Activated B cell treated with CpG ODN at 0.5 μM for 24 hours (primary cell): ENCODE measurements at regions of chr6 and their contacts with region 1.

Region 1: DNA sequence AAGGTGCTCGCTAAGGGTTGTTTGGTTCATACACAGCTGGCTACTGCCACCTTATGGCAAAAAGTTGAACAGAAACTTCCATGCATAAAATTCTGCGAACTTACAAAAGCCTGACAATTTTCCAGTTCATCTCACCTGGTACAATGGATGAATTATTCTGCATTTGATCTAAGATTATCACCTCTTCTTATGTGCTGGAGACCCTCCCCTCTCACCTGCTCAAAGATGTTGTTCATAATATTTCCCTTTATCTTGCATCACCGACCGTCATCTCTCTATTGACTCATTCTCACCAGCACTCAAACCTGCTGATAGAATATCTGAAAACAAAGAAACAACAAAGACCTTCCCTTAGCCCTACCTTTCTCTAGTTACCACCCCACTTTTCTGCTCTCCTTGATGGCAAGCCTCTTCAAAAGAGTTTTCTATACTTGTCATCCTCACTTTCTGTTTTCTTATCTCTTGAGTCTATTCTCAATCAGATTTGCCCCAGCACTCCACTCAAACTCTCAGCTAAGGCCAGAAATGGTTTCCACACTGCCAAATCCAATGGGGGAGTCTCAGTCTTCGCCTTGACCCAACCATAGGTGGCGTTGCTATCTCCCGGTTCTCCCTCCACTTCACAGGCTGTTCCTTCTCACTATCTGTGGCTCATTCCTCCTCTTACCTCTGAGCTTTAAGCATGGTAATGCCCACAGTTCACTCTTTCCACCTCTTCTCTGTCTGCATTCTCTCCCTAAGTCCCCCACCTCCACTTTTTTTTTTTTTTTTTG is 25.8 kb downstream of the SNRNP48 start:
- DNase-seq: no peak
- ATAC-seq: peak; percentile 54
- H3K4me3 Mint-ChIP-seq: no peak overlapping the region
- H3K27ac Mint-ChIP-seq: no peak overlapping the region
- H3K4me1 Mint-ChIP-seq: peaks cover 8% of the 10 kb centered on the region
- H3K27me3 Mint-ChIP-seq: peaks cover 4% of the 10 kb centered on the region
- CTCF ChIP-seq: peak; percentile 26

Region 2: GRCh38 chr6:6556738-6557505 is 1058.9 kb before region 1 on chr6:
- CTCF ChIA-PET with region 1: no interaction called
- POLR2A ChIA-PET with region 1: no interaction called
- intact Hi-C with region 1: loop called (anchors 2 kb)
- DNase-seq: peak; percentile 28
- ATAC-seq: peak; percentile 81
- H3K4me3 Mint-ChIP-seq: no peak overlapping the region
- H3K27ac Mint-ChIP-seq: no peak overlapping the region
- H3K4me1 Mint-ChIP-seq: peaks cover 3% of the 10 kb centered on the region
- H3K27me3 Mint-ChIP-seq: no peaks in the 10 kb centered on the region
- CTCF ChIP-seq: peak; percentile 83

Region 3: DNA sequence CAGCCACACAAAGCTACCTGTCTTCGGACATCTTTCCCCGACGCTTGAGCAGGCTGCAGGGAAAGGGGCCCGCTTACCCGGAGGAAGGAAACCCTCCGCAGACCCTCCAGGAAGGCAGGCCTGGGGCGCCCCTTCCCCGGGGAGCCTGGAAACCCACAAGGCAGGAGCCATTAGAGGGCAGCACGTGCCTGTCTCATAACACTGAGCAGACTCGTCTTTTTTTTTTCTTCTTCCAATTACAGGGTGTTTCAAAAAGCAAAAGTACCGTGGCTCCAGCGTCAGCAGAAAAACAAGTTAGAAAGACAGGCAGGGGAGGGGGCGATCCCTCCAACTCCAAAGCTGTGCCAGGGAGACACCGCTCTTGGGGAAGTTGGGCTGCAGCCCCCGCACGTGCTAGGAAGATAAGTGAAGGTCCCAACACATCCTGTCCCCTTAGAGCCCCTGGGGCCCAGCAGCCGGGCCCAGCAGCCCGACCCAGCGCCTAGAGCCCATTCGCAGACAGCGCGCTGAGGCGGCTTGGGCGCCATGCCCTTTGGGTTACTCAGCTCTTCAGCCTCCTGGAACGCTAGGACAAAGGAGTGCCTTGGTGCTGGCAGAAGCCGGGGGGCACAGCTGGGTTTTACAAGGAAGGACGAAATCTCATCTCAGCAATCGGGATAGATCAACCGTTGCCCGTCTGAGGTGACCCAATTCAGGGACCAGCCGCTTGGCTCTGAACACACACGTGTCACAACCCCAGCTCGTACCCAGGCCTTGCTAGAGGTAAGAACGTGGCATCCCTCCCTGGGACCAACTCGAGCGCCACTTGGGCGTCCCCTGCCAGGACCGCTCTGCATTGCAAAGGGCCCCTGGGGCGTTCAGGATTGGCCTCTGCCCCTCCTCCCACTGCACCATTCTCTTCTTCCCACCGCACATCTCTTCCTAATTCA is 891.0 kb before region 1 on chr6:
- CTCF ChIA-PET with region 1: interaction called, 4 read pairs
- POLR2A ChIA-PET with region 1: no interaction called
- intact Hi-C with region 1: loop called (anchors 1 kb)
- DNase-seq: peak; percentile 40
- ATAC-seq: peak; percentile 84
- H3K4me3 Mint-ChIP-seq: peak overlapping the region; percentile 65
- H3K27ac Mint-ChIP-seq: no peak overlapping the region
- H3K4me1 Mint-ChIP-seq: peaks cover 8% of the 10 kb centered on the region
- H3K27me3 Mint-ChIP-seq: peaks cover 23% of the 10 kb centered on the region
- CTCF ChIP-seq: no peak

Region 4: DNA sequence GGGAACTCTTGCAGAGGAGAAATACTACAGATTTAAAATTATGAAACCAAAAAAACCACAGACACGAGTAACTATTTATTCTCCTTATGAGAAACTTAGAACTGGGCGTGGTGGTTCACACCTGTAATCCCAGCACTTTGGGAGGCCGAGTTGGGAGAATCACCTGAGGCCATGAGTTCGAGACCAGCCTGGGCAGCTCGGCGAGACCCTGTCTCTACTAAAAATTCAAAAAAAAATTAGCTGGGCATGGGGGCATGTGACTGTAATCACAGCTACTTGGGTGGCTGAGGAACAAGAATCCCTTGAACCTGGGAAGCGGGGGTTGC is 339.6 kb before region 1 on chr6:
- CTCF ChIA-PET with region 1: interaction called, 56 read pairs
- POLR2A ChIA-PET with region 1: no interaction called
- intact Hi-C with region 1: loop called (anchors 1 kb)
- DNase-seq: no peak
- ATAC-seq: no peak
- H3K4me3 Mint-ChIP-seq: peak overlapping the region; percentile 53
- H3K27ac Mint-ChIP-seq: peak overlapping the region; percentile 67
- H3K4me1 Mint-ChIP-seq: peaks cover 36% of the 10 kb centered on the region
- H3K27me3 Mint-ChIP-seq: no peaks in the 10 kb centered on the region
- CTCF ChIP-seq: no peak

Region 5: DNA sequence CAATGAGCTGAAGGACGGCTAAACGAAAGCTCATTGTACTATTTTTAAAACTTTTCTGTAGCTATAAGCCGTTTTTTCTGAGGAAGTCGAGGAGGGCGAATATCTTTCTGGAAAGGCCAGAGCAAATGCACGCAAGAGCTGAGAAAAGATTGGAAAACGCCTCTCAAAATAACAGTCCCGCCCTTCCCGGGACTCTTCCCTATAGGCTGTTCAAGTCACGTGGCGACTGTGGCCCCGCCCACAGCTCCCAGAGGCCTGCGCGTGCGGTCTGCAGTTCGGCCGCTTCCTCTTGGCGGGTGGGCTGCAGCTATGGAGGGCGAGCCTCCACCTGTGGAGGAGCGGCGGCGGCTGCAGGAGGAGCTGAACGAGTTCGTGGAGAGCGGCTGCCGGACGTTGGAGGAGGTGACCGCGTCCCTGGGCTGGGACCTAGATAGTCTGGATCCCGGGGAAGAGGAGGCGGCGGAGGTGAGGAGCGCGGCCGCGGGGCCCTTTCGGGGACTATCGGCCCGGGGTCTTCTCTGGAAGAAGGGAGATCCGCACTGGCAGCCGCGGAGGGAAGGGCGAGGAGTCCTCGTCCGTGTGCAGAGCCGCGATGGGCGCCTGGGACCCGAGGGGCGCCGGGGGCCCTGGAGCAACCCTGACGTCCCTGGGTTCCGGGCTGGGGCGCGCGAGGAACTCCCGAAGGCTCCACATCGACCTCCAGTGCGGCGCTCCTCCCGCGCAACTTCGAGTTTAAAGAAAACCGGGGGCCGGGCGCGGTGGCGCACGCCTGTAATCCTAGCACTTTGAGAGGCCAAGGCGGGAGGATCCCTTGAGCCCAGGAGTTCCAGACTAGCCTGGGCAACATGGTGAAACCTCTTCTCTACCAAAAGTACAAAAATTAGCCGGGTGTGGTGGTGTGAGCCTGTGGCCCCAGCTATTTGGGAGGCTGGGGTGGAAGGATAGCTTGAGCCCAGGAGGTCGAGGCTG is 25.6 kb before region 1 on chr6 and contains the start of gene SNRNP48:
- CTCF ChIA-PET with region 1: no interaction called
- POLR2A ChIA-PET with region 1: no interaction called
- intact Hi-C with region 1: loop called (anchors 2 kb)
- DNase-seq: peak; percentile 88
- ATAC-seq: peak; percentile 100
- H3K4me3 Mint-ChIP-seq: peak within 1 kb of the TSS; percentile 98
- H3K27ac Mint-ChIP-seq: peak within 1 kb of the TSS; percentile 84
- H3K4me1 Mint-ChIP-seq: peaks cover 31% of the 10 kb centered on the region
- H3K27me3 Mint-ChIP-seq: no peaks in the 10 kb centered on the region
- CTCF ChIP-seq: no peak
- total RNA-seq, gene SNRNP48: 15.4 and 18.7 TPM in 2 replicates

Region 6: DNA sequence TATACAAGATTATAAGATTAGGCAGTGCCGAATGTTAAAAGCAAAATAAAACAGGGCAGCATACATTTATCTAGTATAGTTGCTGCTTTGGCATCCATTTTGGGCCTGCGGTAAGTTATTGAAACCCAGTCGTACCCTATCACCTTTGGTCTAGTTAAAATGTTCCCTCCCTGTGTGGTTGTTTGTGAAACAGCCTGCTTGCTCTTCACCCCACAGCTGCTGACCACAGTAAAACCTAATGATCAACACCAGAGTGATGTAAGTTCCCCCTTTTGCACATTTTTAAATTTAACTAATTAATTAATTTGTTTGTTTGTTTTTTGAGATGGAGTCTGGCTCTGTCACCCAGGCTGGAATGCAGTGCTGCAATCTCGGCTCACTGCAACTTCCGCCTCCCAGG is 345.1 kb after region 1 on chr6:
- CTCF ChIA-PET with region 1: no interaction called
- POLR2A ChIA-PET with region 1: no interaction called
- intact Hi-C with region 1: no loop called
- DNase-seq: no peak
- ATAC-seq: peak; percentile 35
- H3K4me3 Mint-ChIP-seq: no peak overlapping the region
- H3K27ac Mint-ChIP-seq: peak overlapping the region; percentile 64
- H3K4me1 Mint-ChIP-seq: peaks cover 23% of the 10 kb centered on the region
- H3K27me3 Mint-ChIP-seq: no peaks in the 10 kb centered on the region
- CTCF ChIP-seq: no peak